ENCODE measurements at regions of chr5 and their contacts with region 1.

Region 1: GRCh38 chr5:108727651-108728565 is 19.8 kb upstream of the FER start:
- DNase-seq: peak; percentile 98
- H3K27ac ChIP-seq: peak overlapping the region; percentile 84
- CTCF ChIP-seq: no peak

Region 2: DNA sequence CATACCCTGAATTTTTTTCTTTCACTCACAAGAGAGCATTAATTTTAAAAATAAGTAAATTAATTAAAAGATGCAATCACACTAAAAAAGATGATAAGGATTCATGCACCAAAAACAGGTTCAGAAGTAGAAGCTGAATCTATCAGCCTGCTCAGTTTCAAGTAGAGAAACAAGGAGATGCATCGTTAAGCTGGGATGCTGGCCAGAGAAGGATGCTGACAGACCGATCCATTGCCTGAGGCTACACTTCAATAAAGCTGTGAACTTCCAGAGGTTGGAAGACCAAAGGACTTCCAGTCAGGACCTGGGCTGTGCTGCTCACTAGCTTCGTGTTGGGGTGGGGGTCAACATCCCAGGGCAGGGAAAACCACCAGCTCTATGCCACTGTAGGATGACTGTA is 1514.9 kb before region 1 on chr5:
- CTCF ChIA-PET with region 1: no interaction called
- POLR2A ChIA-PET with region 1: no interaction called
- DNase-seq: no peak
- H3K27ac ChIP-seq: no peak overlapping the region
- CTCF ChIP-seq: no peak

Region 3: DNA sequence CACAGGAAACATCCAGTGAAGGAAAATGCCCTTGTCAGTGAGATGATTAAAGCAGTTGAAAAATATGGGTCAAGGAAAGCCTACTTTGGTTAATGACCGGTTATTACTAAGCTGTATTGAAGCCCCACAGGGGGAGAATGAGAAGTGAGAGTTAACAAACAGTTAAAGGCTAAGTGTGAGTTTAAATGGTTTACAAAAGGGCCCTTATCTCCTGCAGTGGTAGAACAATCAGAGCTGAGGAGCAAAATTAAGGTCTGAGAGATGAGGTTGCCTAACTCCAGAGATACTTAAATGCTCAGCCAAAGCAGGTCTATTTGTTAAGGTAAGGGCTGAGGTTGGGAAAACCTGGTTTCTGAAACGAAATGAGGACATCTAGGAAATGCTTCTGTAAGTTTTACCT is 55.3 kb before region 1 on chr5:
- CTCF ChIA-PET with region 1: interaction called, 10 read pairs
- POLR2A ChIA-PET with region 1: no interaction called
- DNase-seq: no peak
- H3K27ac ChIP-seq: no peak overlapping the region
- CTCF ChIP-seq: no peak

Region 4: GRCh38 chr5:108867656-108868055 is 139.7 kb after region 1 on chr5:
- CTCF ChIA-PET with region 1: no interaction called
- POLR2A ChIA-PET with region 1: no interaction called
- DNase-seq: no peak
- H3K27ac ChIP-seq: no peak overlapping the region
- CTCF ChIP-seq: no peak

Measured in RWPE1 (cell line).